BJ (cell line): ENCODE measurements at regions of chr11 and their contacts with region 1.

Region 1: GRCh38 chr11:101748572-101749344 is 165.0 kb upstream of the TRPC6 start:
- DNase-seq: no peak
- H3K4me3 ChIP-seq: no peak overlapping the region
- H3K27me3 ChIP-seq: no peaks in the 10 kb centered on the region
- CTCF ChIP-seq: no peak

Region 2: GRCh38 chr11:101759771-101760450 is 11.2 kb after region 1 on chr11:
- CTCF ChIA-PET with region 1: interaction called, 11 read pairs
- POLR2A ChIA-PET with region 1: no interaction called
- DNase-seq: no peak
- H3K4me3 ChIP-seq: no peak overlapping the region
- H3K27me3 ChIP-seq: peaks cover 1% of the 10 kb centered on the region; the same call in 1 of the 2 replicates
- CTCF ChIP-seq: peak; percentile 47

Region 3: GRCh38 chr11:101807531-101807930 is 58.8 kb after region 1 on chr11:
- CTCF ChIA-PET with region 1: no interaction called
- POLR2A ChIA-PET with region 1: no interaction called
- DNase-seq: no peak
- H3K4me3 ChIP-seq: no peak overlapping the region
- H3K27me3 ChIP-seq: no peaks in the 10 kb centered on the region
- CTCF ChIP-seq: no peak